ENCODE measurements at regions of chr13 and their contacts with region 1.

Region 1: DNA sequence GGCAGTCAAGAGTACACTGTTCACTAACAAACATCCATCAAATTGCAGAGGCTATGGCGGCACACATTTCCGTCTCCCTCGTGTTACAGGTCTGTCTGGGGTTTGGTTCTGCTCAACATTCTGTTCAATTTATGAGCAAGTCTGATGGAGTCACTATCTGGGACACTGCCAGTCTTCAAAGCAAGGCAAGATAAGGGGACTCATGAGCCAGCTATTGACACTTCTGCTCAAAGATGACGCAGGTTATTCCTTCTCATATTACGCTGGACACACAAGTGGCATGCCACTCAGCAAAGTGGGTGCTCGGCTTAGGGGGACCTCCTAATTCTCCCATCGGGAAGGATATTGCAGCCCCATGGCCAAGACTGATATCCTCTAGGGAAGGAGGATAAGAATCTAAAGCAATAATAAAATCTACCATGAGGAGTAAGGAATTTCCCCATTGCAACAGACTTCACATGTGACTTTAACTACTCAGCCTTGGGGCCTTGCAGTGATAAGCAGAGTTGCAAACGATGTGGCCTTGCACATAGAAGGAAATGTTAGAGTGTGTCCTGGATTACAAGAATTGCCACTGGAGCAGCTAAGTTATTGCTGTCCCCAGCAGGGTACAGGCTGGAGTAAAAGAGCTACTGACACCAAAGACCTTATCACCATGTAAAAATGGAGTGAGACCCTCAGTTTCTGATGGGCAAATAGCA is 306.2 kb downstream of the IRS2 start:
- DNase-seq: no peak
- H3K4me3 ChIP-seq: no peak overlapping the region
- H3K4me3 Mint-ChIP-seq: no peak overlapping the region
- H3K27ac ChIP-seq: no peak overlapping the region
- H3K27ac Mint-ChIP-seq: no peak overlapping the region
- H3K4me1 ChIP-seq: no peaks in the 10 kb centered on the region
- H3K4me1 Mint-ChIP-seq: no peaks in the 10 kb centered on the region
- H3K27me3 ChIP-seq: no peaks in the 10 kb centered on the region
- H3K27me3 Mint-ChIP-seq: peaks cover 0 to 5% of the 10 kb centered on the region in 2 donors

Region 2: DNA sequence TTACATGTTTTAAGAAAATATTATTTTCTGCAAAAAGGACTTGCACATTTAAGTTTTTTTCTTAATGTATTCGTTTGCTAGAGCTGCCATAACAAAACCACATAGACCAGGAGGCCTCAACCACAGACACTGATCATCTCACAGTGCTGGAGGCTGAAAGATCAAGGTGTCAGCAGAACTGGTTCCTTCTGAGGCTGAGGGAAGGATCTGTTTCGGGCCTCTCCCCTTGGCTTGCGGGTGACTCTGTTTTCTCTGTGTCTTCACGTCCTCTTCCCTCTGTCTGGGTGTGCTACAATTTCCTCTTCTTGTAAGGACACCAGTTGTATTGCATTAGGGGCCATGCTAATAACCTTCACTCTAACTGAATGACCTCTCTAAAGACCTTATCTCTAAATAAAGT is 58.0 kb before region 1 on chr13:
- CTCF ChIA-PET with region 1: no interaction called
- POLR2A ChIA-PET with region 1: no interaction called
- intact Hi-C with region 1: loop called (anchors 10 kb)
- DNase-seq: no peak
- H3K4me3 ChIP-seq: no peak overlapping the region
- H3K4me3 Mint-ChIP-seq: no peak overlapping the region
- H3K27ac ChIP-seq: no peak overlapping the region
- H3K27ac Mint-ChIP-seq: no peak overlapping the region
- H3K4me1 ChIP-seq: no peaks in the 10 kb centered on the region
- H3K4me1 Mint-ChIP-seq: no peaks in the 10 kb centered on the region
- H3K27me3 ChIP-seq: no peaks in the 10 kb centered on the region
- H3K27me3 Mint-ChIP-seq: peaks cover 4 to 5% of the 10 kb centered on the region in 2 donors

Region 3: GRCh38 chr13:109454167-109454917 is 25.8 kb before region 1 on chr13:
- CTCF ChIA-PET with region 1: no interaction called
- POLR2A ChIA-PET with region 1: no interaction called
- intact Hi-C with region 1: no loop called
- DNase-seq: no peak
- H3K4me3 ChIP-seq: no peak overlapping the region
- H3K4me3 Mint-ChIP-seq: no peak overlapping the region
- H3K27ac ChIP-seq: no peak overlapping the region
- H3K27ac Mint-ChIP-seq: no peak overlapping the region
- H3K4me1 ChIP-seq: no peaks in the 10 kb centered on the region
- H3K4me1 Mint-ChIP-seq: no peaks in the 10 kb centered on the region
- H3K27me3 ChIP-seq: no peaks in the 10 kb centered on the region
- H3K27me3 Mint-ChIP-seq: peaks cover 7 to 10% of the 10 kb centered on the region in 2 donors

Region 4: GRCh38 chr13:109494925-109495345 is 14.8 kb after region 1 on chr13:
- CTCF ChIA-PET with region 1: no interaction called
- POLR2A ChIA-PET with region 1: no interaction called
- intact Hi-C with region 1: no loop called
- DNase-seq: no peak
- H3K4me3 ChIP-seq: no peak overlapping the region
- H3K4me3 Mint-ChIP-seq: no peak overlapping the region
- H3K27ac ChIP-seq: no peak overlapping the region
- H3K27ac Mint-ChIP-seq: no peak overlapping the region
- H3K4me1 ChIP-seq: no peaks in the 10 kb centered on the region
- H3K4me1 Mint-ChIP-seq: no peaks in the 10 kb centered on the region
- H3K27me3 ChIP-seq: no peaks in the 10 kb centered on the region
- H3K27me3 Mint-ChIP-seq: peaks cover 0 to 2% of the 10 kb centered on the region in 2 donors

Region 5: GRCh38 chr13:109794095-109794494 is 314.0 kb after region 1 on chr13:
- CTCF ChIA-PET with region 1: no interaction called
- POLR2A ChIA-PET with region 1: no interaction called
- intact Hi-C with region 1: no loop called
- DNase-seq: no peak
- H3K4me3 ChIP-seq: no peak overlapping the region
- H3K4me3 Mint-ChIP-seq: no peak overlapping the region
- H3K27ac ChIP-seq: no peak overlapping the region
- H3K27ac Mint-ChIP-seq: no peak overlapping the region
- H3K4me1 ChIP-seq: peaks cover 13% of the 10 kb centered on the region
- H3K4me1 Mint-ChIP-seq: peaks cover 9 to 22% (median 18%) of the 10 kb centered on the region in 4 donors
- H3K27me3 ChIP-seq: no peaks in the 10 kb centered on the region
- H3K27me3 Mint-ChIP-seq: peaks cover 19 to 34% of the 10 kb centered on the region in 2 donors

Measured in CD4-positive, alpha-beta memory T cell (primary cell).